GM12878 (cell line): ENCODE measurements at regions of chr20 and their contacts with region 1.

Region 1: GRCh38 chr20:63056236-63056948 is 49.6 kb upstream of the BHLHE23 start:
- DNase-seq: no peak
- ATAC-seq: peak; percentile 77
- H3K4me3 ChIP-seq: no peak overlapping the region
- H3K27ac ChIP-seq: no peak overlapping the region
- H3K4me1 ChIP-seq: no peaks in the 10 kb centered on the region
- H3K27me3 ChIP-seq: no peaks in the 10 kb centered on the region
- CTCF ChIP-seq: peak; percentile 65 to 85 (median 65)
- EP300 ChIP-seq: no peak
- POLR2A ChIP-seq: no peak
- RAD21 ChIP-seq: peak; percentile 72

Region 2: GRCh38 chr20:63042448-63043071 is 13.8 kb before region 1 on chr20:
- CTCF ChIA-PET with region 1: interaction called, 11 read pairs
- POLR2A ChIA-PET with region 1: no interaction called
- RAD21 ChIA-PET with region 1: no interaction called
- SMC1A ChIA-PET with region 1: interaction called, 4 read pairs
- in situ Hi-C with region 1: no loop called
- intact Hi-C with region 1: no loop called
- DNase-seq: peak; percentile 63
- ATAC-seq: peak; percentile 83
- H3K4me3 ChIP-seq: no peak overlapping the region
- H3K27ac ChIP-seq: no peak overlapping the region
- H3K4me1 ChIP-seq: peaks cover 6% of the 10 kb centered on the region
- H3K27me3 ChIP-seq: no peaks in the 10 kb centered on the region
- CTCF ChIP-seq: peak in 2 of 3 experiments; percentile 3 to 21; a peak in 1 of 6 replicates
- EP300 ChIP-seq: peak; percentile 78 to 90
- POLR2A ChIP-seq: no peak
- RAD21 ChIP-seq: no peak

Region 3: GRCh38 chr20:63360850-63361518 is 304.6 kb after region 1 on chr20 and contains the start of gene CHRNA4:
- CTCF ChIA-PET with region 1: no interaction called
- POLR2A ChIA-PET with region 1: no interaction called
- RAD21 ChIA-PET with region 1: no interaction called
- SMC1A ChIA-PET with region 1: no interaction called
- in situ Hi-C with region 1: no loop called
- intact Hi-C with region 1: no loop called
- DNase-seq: no peak
- ATAC-seq: no peak
- H3K4me3 ChIP-seq: no peak within 1 kb of the TSS
- H3K27ac ChIP-seq: no peak within 1 kb of the TSS
- H3K4me1 ChIP-seq: no peaks in the 10 kb centered on the region
- H3K27me3 ChIP-seq: no peaks in the 10 kb centered on the region; a peak in 1 of 4 replicates
- CTCF ChIP-seq: no peak
- EP300 ChIP-seq: no peak
- POLR2A ChIP-seq: no peak
- RAD21 ChIP-seq: no peak
- polyA plus RNA-seq, gene CHRNA4: not detected